CD14-positive monocyte (primary cell): ENCODE measurements at regions of chr12 and their contacts with region 1.

Region 1: GRCh38 chr12:949453-950191 is at the start of gene RAD52:
- DNase-seq: peak; percentile 97 to 98 (median 97)
- H3K4me3 ChIP-seq: peak within 1 kb of the TSS; percentile 68 to 89 (median 85)
- H3K4me3 Mint-ChIP-seq: peak within 1 kb of the TSS; percentile 95 to 98
- H3K27ac ChIP-seq: peak within 1 kb of the TSS; percentile 91 to 93
- H3K27ac Mint-ChIP-seq: peak within 1 kb of the TSS; percentile 89 to 98 (median 94)
- H3K4me1 ChIP-seq: peaks cover 19 to 22% of the 10 kb centered on the region in 2 donors
- H3K4me1 Mint-ChIP-seq: peaks cover 33% of the 10 kb centered on the region
- H3K27me3 ChIP-seq: no peaks in the 10 kb centered on the region
- H3K27me3 Mint-ChIP-seq: no peaks in the 10 kb centered on the region
- CTCF ChIP-seq: peak; percentile 99
- polyA plus RNA-seq, gene RAD52: 0.79 to 14.3 (median 1.1) TPM

Region 2: DNA sequence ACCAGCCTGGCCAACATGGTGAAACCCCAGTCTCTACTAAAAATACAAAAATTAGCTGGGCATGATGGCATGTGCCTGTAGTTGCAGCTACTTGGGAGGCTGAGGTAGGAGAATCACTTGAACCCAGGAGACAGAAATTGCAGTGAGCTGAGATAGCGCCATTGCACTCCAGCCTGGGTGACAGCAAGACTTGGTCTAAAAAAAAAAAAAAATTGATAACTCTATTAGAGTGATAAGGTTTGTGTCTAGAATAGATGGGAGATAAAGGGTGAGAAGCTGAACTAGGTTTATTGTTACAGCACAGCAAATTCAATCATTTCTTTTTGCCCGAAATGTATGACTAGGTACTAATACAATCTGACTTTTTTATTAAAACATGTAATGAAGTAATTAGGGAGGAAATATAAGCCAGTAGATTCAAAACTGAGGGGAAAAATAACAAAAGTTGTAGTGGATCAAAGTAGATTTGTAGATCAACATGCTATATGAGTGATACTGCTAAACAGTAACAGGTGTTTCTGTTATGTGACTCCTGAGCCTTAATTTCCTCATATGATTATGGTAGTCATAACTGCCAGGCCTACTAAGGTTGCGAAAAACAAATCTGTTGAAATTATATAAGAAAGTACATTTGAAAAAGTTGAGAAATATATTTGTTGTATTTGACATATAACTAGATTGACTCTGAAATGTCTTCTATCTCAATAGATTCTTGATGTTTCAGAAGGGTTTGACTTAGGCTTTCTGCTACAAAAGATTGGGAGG is 113.7 kb before region 1 on chr12:
- intact Hi-C with region 1: no loop called
- DNase-seq: peak in 1 of 3 donors; percentile 49
- H3K4me3 ChIP-seq: no peak overlapping the region
- H3K4me3 Mint-ChIP-seq: no peak overlapping the region
- H3K27ac ChIP-seq: peak overlapping the region in 1 of 2 donors; percentile 24
- H3K27ac Mint-ChIP-seq: peak overlapping the region in 1 of 7 donors; percentile 18
- H3K4me1 ChIP-seq: peaks cover 0 to 5% of the 10 kb centered on the region in 2 donors
- H3K4me1 Mint-ChIP-seq: peaks cover 22% of the 10 kb centered on the region
- H3K27me3 ChIP-seq: no peaks in the 10 kb centered on the region
- H3K27me3 Mint-ChIP-seq: no peaks in the 10 kb centered on the region
- CTCF ChIP-seq: no peak

Region 3: GRCh38 chr12:896031-896430 is 53.6 kb before region 1 on chr12:
- intact Hi-C with region 1: loop called in 1 of 2 experiments (anchors 10 kb)
- DNase-seq: no peak
- H3K4me3 ChIP-seq: no peak overlapping the region
- H3K4me3 Mint-ChIP-seq: no peak overlapping the region
- H3K27ac ChIP-seq: no peak overlapping the region
- H3K27ac Mint-ChIP-seq: no peak overlapping the region
- H3K4me1 ChIP-seq: no peaks in the 10 kb centered on the region
- H3K4me1 Mint-ChIP-seq: peaks cover 4% of the 10 kb centered on the region
- H3K27me3 ChIP-seq: no peaks in the 10 kb centered on the region
- H3K27me3 Mint-ChIP-seq: no peaks in the 10 kb centered on the region
- CTCF ChIP-seq: no peak

Region 4: DNA sequence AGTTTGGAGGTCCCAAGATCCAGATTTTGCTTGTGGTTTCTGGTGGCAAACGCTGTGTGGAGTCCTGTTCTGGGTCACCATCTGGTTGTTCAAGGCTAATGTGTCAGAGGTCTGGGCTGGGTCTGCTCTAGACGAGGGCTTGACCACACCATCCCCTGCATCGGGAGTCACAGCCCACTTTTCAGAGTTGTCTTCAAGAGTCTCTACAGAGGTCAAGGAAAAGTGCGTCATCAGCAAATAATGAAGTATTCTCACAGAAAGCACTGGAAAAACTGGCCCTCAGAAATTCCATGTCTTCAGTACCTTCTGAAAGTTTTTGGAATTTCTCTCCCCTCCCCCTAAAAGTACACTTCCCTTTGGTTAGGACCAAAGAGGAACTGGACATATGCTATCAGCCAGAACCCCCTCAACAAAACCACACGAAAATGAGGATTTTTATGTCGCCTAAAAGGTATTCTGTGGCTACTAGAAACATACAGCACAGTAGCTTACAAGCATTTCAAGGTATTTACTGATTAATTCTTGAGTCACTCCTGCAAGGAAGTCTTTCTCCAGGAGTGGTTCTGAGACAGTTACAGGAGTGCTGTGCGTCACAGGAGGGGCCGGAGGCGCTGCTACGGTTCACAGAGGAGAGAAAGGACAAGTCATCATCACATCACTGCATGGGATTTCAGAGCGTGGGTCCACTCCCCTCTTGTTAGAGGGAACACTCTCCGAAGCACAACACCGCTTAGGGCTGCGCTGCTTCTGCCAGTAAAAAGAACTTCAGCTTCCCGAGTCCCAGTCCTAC is 35.5 kb before region 1 on chr12:
- intact Hi-C with region 1: loop called in 1 of 2 experiments (anchors 5 kb)
- DNase-seq: peak in 2 of 3 donors; percentile 3 to 14
- H3K4me3 ChIP-seq: no peak overlapping the region
- H3K4me3 Mint-ChIP-seq: no peak overlapping the region
- H3K27ac ChIP-seq: peak overlapping the region in 1 of 2 donors; percentile 17
- H3K27ac Mint-ChIP-seq: peak overlapping the region in 3 of 7 donors; percentile 37 to 80 (median 55)
- H3K4me1 ChIP-seq: peaks cover 16 to 26% of the 10 kb centered on the region in 2 donors
- H3K4me1 Mint-ChIP-seq: peaks cover 35% of the 10 kb centered on the region
- H3K27me3 ChIP-seq: no peaks in the 10 kb centered on the region
- H3K27me3 Mint-ChIP-seq: peaks cover 0 to 2% (median 2%) of the 10 kb centered on the region in 3 donors
- CTCF ChIP-seq: no peak

Region 5: DNA sequence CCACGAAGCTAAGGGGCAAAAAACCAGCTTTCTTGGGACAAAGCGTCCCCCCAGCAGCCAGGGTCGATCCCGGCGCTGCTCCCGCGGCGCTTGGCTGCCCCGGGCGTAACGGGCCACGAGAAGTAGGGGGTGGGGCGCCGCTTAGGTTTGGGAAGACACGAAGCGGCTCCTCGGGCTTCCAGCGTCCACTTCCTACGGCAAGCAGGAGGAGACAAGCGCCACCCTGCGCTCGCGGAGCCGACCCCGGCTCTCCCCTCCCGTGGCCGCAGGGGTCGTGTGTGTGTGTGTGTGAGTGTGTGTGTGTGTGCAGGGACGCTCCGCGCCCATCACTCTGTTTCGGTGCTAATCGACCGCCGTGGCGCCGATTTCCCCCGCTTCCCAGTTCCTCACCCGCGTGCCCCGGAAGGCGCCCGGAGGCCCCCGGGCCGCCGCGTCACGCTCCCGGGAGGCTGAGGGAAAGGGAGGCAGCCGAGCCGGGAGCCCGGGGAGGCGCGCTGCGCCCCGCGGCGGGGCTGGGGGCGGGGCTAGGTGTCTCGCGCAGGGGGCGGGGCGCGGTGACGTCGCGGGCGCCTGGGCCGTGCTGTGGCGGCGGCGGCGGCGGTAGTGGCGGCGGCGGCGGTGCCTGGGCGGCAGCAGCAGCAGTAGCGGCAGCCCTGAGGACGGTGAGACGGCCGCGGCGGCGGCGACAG is 41.2 kb after region 1 on chr12 and contains the start of gene ERC1:
- intact Hi-C with region 1: loop called (anchors 5 kb)
- DNase-seq: peak; percentile 71 to 78 (median 77)
- H3K4me3 ChIP-seq: peak within 1 kb of the TSS; percentile 73 to 98 (median 87)
- H3K4me3 Mint-ChIP-seq: peak within 1 kb of the TSS; percentile 93 to 95
- H3K27ac ChIP-seq: peak within 1 kb of the TSS; percentile 93 to 97
- H3K27ac Mint-ChIP-seq: peak within 1 kb of the TSS; percentile 90 to 99 (median 92)
- H3K4me1 ChIP-seq: peaks cover 41 to 50% of the 10 kb centered on the region in 2 donors
- H3K4me1 Mint-ChIP-seq: peaks cover 56% of the 10 kb centered on the region
- H3K27me3 ChIP-seq: no peaks in the 10 kb centered on the region
- H3K27me3 Mint-ChIP-seq: peaks cover 0 to 2% (median 1%) of the 10 kb centered on the region in 3 donors
- CTCF ChIP-seq: no peak
- polyA plus RNA-seq, gene ERC1: 4.0 to 14.3 (median 5.1) TPM